ENCODE measurements at regions of chr6 and their contacts with region 1.

Region 1: GRCh38 chr6:32868257-32868788 is 14.3 kb downstream of the PSMB9 start:
- DNase-seq: peak; percentile 95
- H3K4me3 Mint-ChIP-seq: no peak overlapping the region
- H3K27ac Mint-ChIP-seq: no peak overlapping the region
- H3K4me1 Mint-ChIP-seq: peaks cover 39% of the 10 kb centered on the region
- H3K27me3 Mint-ChIP-seq: no peaks in the 10 kb centered on the region

Region 2: DNA sequence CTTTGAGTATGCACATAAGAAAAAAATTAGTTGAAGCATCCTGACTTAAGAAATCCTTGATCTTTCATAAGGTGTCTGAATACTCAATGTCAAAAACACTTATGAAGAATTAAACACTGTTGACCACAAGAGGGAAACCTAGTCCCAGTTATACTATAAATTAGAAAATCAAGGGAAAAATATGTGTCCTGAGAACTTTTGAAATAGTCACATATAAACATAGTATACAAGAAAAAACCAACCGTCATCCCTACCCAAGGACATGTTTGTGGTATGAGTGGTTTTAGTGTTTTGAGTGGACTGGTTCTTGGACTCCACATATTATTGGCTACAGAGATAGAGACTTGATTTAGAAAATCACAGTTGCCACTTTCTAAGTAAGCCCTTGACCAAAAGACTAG is 436.3 kb before region 1 on chr6:
- CTCF ChIA-PET with region 1: interaction called, 4 read pairs
- intact Hi-C with region 1: loop called (anchors 1 kb)
- DNase-seq: no peak
- H3K4me3 Mint-ChIP-seq: no peak overlapping the region
- H3K27ac Mint-ChIP-seq: no peak overlapping the region
- H3K4me1 Mint-ChIP-seq: no peaks in the 10 kb centered on the region
- H3K27me3 Mint-ChIP-seq: peaks cover 2% of the 10 kb centered on the region

Region 3: DNA sequence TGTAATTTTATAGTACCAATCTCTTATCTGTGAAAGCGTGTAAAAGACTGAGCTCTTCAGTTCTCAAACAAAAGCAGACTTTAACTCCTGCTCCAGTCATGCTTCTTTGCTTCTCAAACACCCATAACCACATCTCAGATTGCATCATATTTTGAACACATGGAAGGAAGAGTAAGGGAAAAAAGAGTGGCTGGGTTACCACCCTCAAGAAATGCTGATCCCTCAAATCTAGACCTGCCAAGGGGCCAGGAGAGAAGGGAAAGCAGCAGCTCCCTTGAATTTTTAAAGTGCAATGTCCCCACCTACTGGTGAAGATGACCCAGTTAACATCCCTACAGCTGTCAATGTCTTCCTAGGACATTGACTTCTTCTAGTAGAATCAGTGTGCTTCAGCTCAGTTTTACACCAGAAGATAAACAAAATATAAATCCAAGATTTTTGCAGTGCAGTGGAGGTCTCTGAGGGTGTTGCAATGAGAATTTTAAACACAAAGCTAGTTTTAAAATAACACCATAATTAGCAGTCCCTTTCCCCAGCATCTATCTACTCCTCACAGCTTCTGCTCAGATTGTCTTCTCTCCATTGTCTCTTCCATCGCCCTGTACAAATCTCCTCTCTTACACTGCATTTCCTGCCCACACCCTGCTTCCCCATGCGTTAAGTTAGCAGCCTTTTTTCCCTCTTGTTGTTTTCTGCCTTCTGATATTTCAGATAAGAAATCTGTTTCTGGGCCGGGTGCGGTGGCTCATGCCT is 82.4 kb before region 1 on chr6:
- CTCF ChIA-PET with region 1: interaction called, 14 read pairs
- intact Hi-C with region 1: no loop called
- DNase-seq: peak; percentile 49
- H3K4me3 Mint-ChIP-seq: no peak overlapping the region
- H3K27ac Mint-ChIP-seq: no peak overlapping the region
- H3K4me1 Mint-ChIP-seq: no peaks in the 10 kb centered on the region
- H3K27me3 Mint-ChIP-seq: peaks cover 13% of the 10 kb centered on the region

Region 4: GRCh38 chr6:32819729-32820128 is 48.6 kb before region 1 on chr6:
- CTCF ChIA-PET with region 1: interaction called, 17 read pairs
- intact Hi-C with region 1: no loop called
- DNase-seq: no peak
- H3K4me3 Mint-ChIP-seq: no peak overlapping the region
- H3K27ac Mint-ChIP-seq: no peak overlapping the region
- H3K4me1 Mint-ChIP-seq: peaks cover 2% of the 10 kb centered on the region
- H3K27me3 Mint-ChIP-seq: no peaks in the 10 kb centered on the region

Region 5: GRCh38 chr6:32838114-32838958 is 30.0 kb before region 1 on chr6 and contains the start of gene TAP2:
- CTCF ChIA-PET with region 1: interaction called, 204 read pairs
- intact Hi-C with region 1: loop called (anchors 1 kb)
- DNase-seq: peak; percentile 98
- H3K4me3 Mint-ChIP-seq: peak within 1 kb of the TSS; percentile 89
- H3K27ac Mint-ChIP-seq: peak within 1 kb of the TSS; percentile 99
- H3K4me1 Mint-ChIP-seq: peaks cover 81% of the 10 kb centered on the region
- H3K27me3 Mint-ChIP-seq: no peaks in the 10 kb centered on the region
- total RNA-seq, gene TAP2: 136 to 138 TPM

Region 6: DNA sequence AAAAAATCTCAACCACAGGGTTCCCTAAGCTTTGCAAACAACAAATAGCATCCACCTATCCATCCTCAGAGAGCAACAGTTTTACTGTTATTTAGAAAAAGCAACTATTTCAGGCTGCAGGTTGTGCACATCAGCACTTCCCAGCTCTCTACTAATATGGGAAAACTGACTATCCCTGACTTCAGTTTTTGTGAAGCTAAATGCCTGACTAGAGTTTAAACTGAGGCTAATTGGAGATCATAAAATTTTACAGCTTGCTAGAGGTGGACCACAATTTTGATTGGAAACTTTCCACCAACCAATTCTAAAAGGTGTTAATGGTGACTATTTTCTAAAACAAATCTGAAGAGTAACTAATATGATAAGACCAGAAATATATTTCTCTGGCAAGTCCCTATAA is 35.6 kb after region 1 on chr6:
- CTCF ChIA-PET with region 1: no interaction called
- intact Hi-C with region 1: no loop called
- DNase-seq: no peak
- H3K4me3 Mint-ChIP-seq: no peak overlapping the region
- H3K27ac Mint-ChIP-seq: no peak overlapping the region
- H3K4me1 Mint-ChIP-seq: no peaks in the 10 kb centered on the region
- H3K27me3 Mint-ChIP-seq: no peaks in the 10 kb centered on the region